Mammary epithelial cell (primary cell): ENCODE measurements at regions of chr5 and their contacts with region 1.

Region 1: GRCh38 chr5:179806250-179807222 is at the start of gene MGAT4B:
- DNase-seq: peak; percentile 81
- H3K4me3 ChIP-seq: peak within 1 kb of the TSS; percentile 83 to 89 (median 86)
- H3K27ac ChIP-seq: peak within 1 kb of the TSS; percentile 27
- H3K4me1 ChIP-seq: peaks cover 36% of the 10 kb centered on the region
- H3K27me3 ChIP-seq: no peaks in the 10 kb centered on the region
- CTCF ChIP-seq: no peak
- total RNA-seq, gene MGAT4B: 88.0 to 143 TPM

Region 2: GRCh38 chr5:179732417-179732917 is 74.1 kb before region 1 on chr5 and contains the start of gene MAML1:
- CTCF ChIA-PET with region 1: no interaction called
- dilution Hi-C with region 1: no loop called
- in situ Hi-C with region 1: no loop called
- intact Hi-C with region 1: loop called (anchors 2 kb)
- DNase-seq: peak; percentile 100
- H3K4me3 ChIP-seq: peak within 1 kb of the TSS; percentile 58 to 82 (median 60)
- H3K27ac ChIP-seq: peak within 1 kb of the TSS; percentile 67
- H3K4me1 ChIP-seq: peaks cover 8% of the 10 kb centered on the region
- H3K27me3 ChIP-seq: no peaks in the 10 kb centered on the region
- CTCF ChIP-seq: no peak
- total RNA-seq, gene MAML1: 10.5 to 17.7 TPM

Region 3: DNA sequence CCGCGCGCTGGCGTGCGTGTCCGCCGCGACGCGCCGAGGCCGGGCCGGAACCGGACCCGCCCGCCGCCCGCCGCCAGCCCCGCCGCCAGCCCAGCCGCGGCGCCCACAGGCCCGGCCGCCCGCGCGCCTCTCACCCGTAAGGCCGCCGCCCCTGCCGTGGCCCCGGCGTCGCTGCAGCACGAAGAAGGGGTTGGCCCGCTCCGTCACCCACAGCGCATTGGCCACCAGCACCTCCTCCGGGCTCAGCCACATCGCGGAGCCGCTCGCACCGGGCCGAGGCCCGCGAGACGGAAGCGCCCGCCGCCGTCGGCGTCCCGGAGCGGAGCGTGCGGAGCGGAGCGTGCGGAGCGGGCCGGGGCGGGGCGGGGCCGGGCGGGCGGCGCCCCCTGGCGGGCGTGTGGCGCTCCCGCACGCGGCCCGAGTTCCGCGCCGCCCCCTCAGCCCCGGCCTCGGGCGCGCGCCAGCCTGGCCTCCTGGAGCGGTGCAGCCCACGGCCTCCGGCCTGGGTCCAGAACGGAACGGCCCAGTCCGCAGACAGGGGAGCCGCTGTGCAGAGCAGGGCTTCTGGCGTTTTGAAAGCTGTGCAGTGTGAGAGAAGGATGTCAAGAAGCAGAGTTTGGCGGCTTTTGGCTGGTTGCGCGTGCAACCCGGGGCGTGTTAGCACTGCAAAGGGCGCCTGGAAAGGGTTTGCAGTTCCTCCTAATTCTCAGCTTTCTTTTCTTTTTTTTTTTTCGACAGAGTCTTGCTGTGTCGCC is 101.2 kb after region 1 on chr5 and contains the start of gene TBC1D9B:
- CTCF ChIA-PET with region 1: no interaction called
- dilution Hi-C with region 1: no loop called
- in situ Hi-C with region 1: loop called in 1 of 2 experiments (anchors 10 kb)
- intact Hi-C with region 1: loop called (anchors 2 kb)
- DNase-seq: peak; percentile 60
- H3K4me3 ChIP-seq: peak within 1 kb of the TSS; percentile 82 to 94 (median 91)
- H3K27ac ChIP-seq: peak within 1 kb of the TSS; percentile 44
- H3K4me1 ChIP-seq: peaks cover 13% of the 10 kb centered on the region
- H3K27me3 ChIP-seq: no peaks in the 10 kb centered on the region
- CTCF ChIP-seq: peak; percentile 23 to 24
- total RNA-seq, gene TBC1D9B: 71.0 to 112 TPM